ENCODE measurements at regions of chr14 and their contacts with region 1.

Region 1: DNA sequence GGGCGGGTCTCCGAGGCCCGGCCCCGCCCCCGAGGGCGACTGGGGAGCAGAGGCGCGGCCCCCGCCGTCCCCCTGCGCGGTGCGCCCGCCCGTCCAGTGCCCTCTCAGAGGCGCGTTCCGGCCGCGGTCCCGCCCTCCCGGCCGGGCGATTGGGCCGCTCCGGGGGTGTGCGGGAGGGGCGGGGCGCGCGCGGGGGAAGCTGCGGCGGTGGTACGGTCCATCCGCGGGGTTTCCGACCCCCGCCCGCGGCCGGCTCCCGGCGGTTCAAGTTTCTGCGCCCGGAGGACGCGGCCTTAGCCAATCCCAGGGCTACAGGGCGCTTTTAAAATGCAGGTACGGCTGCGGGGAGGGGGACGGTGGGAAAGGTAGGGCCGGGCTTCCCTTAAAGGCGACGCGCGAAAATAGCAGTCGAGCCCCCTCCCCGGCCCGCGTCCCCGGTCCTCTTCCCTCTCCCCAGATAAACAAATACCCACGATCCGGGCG is 317 bp upstream of the CCDC85C start:
- DNase-seq: peak; percentile 98
- H3K4me3 ChIP-seq: peak overlapping the region; percentile 76 to 89 (median 80)
- H3K27ac ChIP-seq: peak overlapping the region; percentile 95 to 98 (median 96)
- H3K4me1 ChIP-seq: peaks cover 0 to 56% (median 40%) of the 10 kb centered on the region in 4 donors
- H3K27me3 ChIP-seq: no peaks in the 10 kb centered on the region
- CTCF ChIP-seq: no peak
- EP300 ChIP-seq: peak in 1 of 4 donors; percentile 15
- POLR2A ChIP-seq: peak in 1 of 2 donors; percentile 25

Region 2: DNA sequence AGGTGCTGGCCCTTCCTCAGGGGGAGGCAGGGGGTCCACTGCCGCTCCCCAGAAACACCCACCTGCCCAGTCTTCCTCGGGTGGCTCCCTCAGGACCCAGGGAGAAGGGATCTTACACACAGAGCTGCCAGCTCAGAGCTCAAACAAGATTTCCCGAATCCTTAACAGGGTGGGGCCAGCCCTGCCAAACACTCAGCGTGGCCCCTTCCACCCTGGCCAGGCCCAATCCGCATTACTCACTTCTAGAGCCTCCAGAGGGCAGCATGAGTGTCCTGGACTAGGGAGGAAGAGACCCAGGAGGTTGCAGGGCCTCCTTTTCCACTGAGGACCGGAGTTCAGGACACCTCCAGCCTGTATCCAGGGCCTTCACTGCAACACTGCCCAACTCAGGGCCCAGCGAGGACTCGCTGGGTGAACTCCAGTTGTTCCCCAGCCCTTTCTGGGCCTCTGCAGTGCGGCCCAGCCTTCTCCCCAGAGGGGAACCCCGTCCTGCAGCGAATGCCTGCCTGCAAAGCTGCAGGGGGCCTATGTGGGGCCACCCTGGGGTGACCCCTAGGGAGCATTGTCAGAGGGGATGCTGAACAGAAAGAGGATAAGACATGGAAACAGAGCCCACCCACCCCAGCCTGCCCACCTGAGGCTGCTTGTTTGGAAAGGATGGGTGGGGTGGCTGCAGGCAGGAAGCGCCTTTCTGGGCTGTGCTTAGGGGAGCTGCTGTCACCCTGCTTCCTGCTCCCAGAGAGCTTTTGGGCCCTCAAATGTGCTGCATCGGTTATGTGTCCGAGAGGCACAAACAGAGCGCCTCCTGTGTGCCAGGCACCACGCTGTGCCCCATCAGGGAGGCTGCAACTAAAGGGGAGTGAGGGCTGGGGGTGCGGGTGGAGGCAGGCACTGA is 79.3 kb before region 1 on chr14:
- intact Hi-C with region 1: loop called (anchors 2 kb)
- DNase-seq: no peak
- H3K4me3 ChIP-seq: no peak overlapping the region
- H3K27ac ChIP-seq: peak overlapping the region; percentile 82 to 90 (median 84)
- H3K4me1 ChIP-seq: peaks cover 0 to 71% (median 69%) of the 10 kb centered on the region in 4 donors
- H3K27me3 ChIP-seq: no peaks in the 10 kb centered on the region
- CTCF ChIP-seq: peak in 1 of 4 experiments; percentile 40
- EP300 ChIP-seq: no peak
- POLR2A ChIP-seq: no peak

Region 3: DNA sequence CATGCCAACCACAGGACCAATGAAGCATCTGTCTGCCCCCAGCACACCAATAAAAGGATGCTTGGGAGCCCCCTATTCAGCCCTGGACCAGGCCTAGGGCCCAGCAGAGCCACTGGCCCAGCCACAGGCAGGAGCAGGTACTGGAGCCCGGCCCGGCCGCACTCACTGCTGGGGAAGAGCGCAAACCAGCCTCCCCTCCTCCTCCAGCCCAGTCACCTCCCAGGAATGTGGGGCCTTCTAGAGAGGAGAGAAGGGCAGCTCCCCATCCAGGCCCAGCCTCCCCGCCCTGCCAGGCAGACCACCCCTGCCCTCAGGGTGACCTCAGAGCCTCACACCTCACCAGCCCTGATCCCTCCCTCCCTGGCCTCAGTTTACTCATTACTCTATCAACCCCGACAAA is 66.9 kb before region 1 on chr14:
- intact Hi-C with region 1: loop called (anchors 5 kb)
- DNase-seq: peak; percentile 91
- H3K4me3 ChIP-seq: no peak overlapping the region
- H3K27ac ChIP-seq: peak overlapping the region; percentile 74 to 94 (median 87)
- H3K4me1 ChIP-seq: peaks cover 0 to 88% (median 77%) of the 10 kb centered on the region in 4 donors
- H3K27me3 ChIP-seq: no peaks in the 10 kb centered on the region
- CTCF ChIP-seq: peak in 1 of 4 experiments; percentile 7
- EP300 ChIP-seq: no peak
- POLR2A ChIP-seq: no peak

Region 4: GRCh38 chr14:99563233-99564129 is 40.8 kb before region 1 on chr14:
- intact Hi-C with region 1: loop called (anchors 5 kb)
- DNase-seq: peak; percentile 96
- H3K4me3 ChIP-seq: no peak overlapping the region
- H3K27ac ChIP-seq: peak overlapping the region; percentile 81 to 94 (median 88)
- H3K4me1 ChIP-seq: peaks cover 0 to 98% (median 96%) of the 10 kb centered on the region in 4 donors
- H3K27me3 ChIP-seq: no peaks in the 10 kb centered on the region
- CTCF ChIP-seq: peak; percentile 10 to 42 (median 29)
- EP300 ChIP-seq: peak in 2 of 4 donors; percentile 74 to 76
- POLR2A ChIP-seq: no peak

Region 5: DNA sequence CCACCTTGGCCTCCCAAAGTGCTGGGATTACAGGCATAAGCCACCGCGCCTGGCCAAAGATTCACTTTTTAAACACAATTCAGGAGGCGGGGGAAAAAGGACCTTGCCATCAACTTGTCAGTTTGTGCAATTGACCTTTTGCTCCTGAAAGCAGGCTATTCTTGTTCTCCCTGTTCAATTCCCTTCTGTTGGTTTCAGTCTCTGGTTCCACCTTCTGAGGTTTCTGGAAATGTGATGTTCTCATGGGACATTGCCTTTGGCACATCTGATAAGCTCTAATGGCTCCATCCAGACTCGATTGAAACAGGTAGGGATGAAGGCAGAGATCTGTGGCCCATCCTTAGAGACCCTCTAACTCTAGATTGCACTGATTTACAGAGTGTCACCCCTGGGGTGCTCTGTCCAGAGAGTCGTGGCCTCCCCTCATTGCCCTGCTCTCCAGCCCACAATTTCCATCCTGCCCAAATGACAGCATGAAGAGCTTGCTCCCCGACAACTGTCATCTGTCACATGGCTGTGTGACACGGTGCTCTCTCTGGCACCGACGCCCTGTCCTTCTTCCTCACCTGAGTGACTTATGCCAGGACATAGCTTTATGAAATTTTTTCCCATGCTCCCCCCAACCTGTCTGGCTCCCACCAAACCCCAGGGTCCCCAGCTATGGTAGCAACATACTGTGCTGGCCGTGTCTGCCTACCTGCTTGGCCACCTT is 17.8 kb after region 1 on chr14:
- intact Hi-C with region 1: loop called (anchors 2 kb)
- DNase-seq: no peak
- H3K4me3 ChIP-seq: no peak overlapping the region
- H3K27ac ChIP-seq: peak overlapping the region in 2 of 4 donors; percentile 73 to 76
- H3K4me1 ChIP-seq: peaks cover 0 to 26% (median 18%) of the 10 kb centered on the region in 4 donors
- H3K27me3 ChIP-seq: no peaks in the 10 kb centered on the region
- CTCF ChIP-seq: no peak
- EP300 ChIP-seq: no peak
- POLR2A ChIP-seq: no peak

Region 6: GRCh38 chr14:99809861-99810260 is 205.5 kb after region 1 on chr14:
- intact Hi-C with region 1: no loop called
- DNase-seq: peak; percentile 83
- H3K4me3 ChIP-seq: no peak overlapping the region
- H3K27ac ChIP-seq: peak overlapping the region; percentile 75 to 84 (median 80)
- H3K4me1 ChIP-seq: peaks cover 0 to 83% (median 65%) of the 10 kb centered on the region in 4 donors
- H3K27me3 ChIP-seq: no peaks in the 10 kb centered on the region
- CTCF ChIP-seq: no peak
- EP300 ChIP-seq: no peak
- POLR2A ChIP-seq: no peak